ENCODE measurements at regions of chr15 and their contacts with region 1.

Region 1: GRCh38 chr15:95259513-95259912 is 1028.2 kb downstream of the MCTP2 start:
- DNase-seq: peak; percentile 63
- ATAC-seq: peak; percentile 47
- H3K4me3 Mint-ChIP-seq: no peak overlapping the region
- H3K27ac Mint-ChIP-seq: no peak overlapping the region
- H3K4me1 Mint-ChIP-seq: peaks cover 2% of the 10 kb centered on the region
- H3K27me3 Mint-ChIP-seq: peaks cover 51% of the 10 kb centered on the region

Region 2: GRCh38 chr15:95284933-95285421 is 25.5 kb after region 1 on chr15:
- CTCF ChIA-PET with region 1: interaction called, 11 read pairs
- DNase-seq: peak; percentile 56
- ATAC-seq: peak; percentile 75
- H3K4me3 Mint-ChIP-seq: no peak overlapping the region
- H3K27ac Mint-ChIP-seq: peak overlapping the region; percentile 39
- H3K4me1 Mint-ChIP-seq: peaks cover 19% of the 10 kb centered on the region
- H3K27me3 Mint-ChIP-seq: peaks cover 60% of the 10 kb centered on the region